Prostate gland (tissue), 2 donors: ENCODE measurements at regions of chr2 and their contacts with region 1.

Region 1: DNA sequence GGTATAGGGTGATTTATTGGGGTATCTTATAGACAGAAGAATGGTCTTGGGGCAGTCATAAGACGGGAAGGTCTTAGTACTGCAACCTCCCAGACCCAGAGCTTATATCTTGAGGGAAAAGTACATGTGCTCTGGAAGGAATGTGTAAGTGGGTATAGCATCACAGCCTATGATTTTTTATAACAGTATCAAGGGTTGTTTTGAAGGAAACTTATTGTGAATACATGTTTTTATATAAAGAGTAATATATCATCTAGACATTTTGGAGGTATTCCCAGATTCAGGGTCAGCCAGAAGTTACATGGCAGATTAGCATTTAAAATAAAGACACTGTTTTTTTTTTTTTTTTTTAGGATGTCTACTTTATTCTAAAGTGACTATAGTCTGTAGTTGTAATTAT is 47.6 kb upstream of the STON1 start:
- DNase-seq: no peak
- H3K4me3 ChIP-seq: no peak overlapping the region
- H3K27ac ChIP-seq: peak overlapping the region; percentile 30 to 55
- H3K4me1 ChIP-seq: no peaks in the 10 kb centered on the region
- H3K27me3 ChIP-seq: no peaks in the 10 kb centered on the region
- CTCF ChIP-seq: no peak
- POLR2A ChIP-seq: no peak

Region 2: GRCh38 chr2:48452108-48452507 is 30.2 kb before region 1 on chr2:
- intact Hi-C with region 1: no loop called
- DNase-seq: no peak
- H3K4me3 ChIP-seq: no peak overlapping the region
- H3K27ac ChIP-seq: no peak overlapping the region
- H3K4me1 ChIP-seq: peaks cover 14% of the 10 kb centered on the region
- H3K27me3 ChIP-seq: no peaks in the 10 kb centered on the region
- CTCF ChIP-seq: no peak
- POLR2A ChIP-seq: no peak

Region 3: GRCh38 chr2:48510329-48510728 is 28.0 kb after region 1 on chr2:
- intact Hi-C with region 1: loop called (anchors 5 kb)
- DNase-seq: no peak
- H3K4me3 ChIP-seq: no peak overlapping the region
- H3K27ac ChIP-seq: peak overlapping the region; percentile 54 to 66
- H3K4me1 ChIP-seq: peaks cover 2% of the 10 kb centered on the region
- H3K27me3 ChIP-seq: no peaks in the 10 kb centered on the region
- CTCF ChIP-seq: no peak
- POLR2A ChIP-seq: peak; percentile 18

Region 4: GRCh38 chr2:48566592-48567255 is 84.4 kb after region 1 on chr2:
- intact Hi-C with region 1: no loop called
- DNase-seq: no peak
- H3K4me3 ChIP-seq: no peak overlapping the region
- H3K27ac ChIP-seq: peak overlapping the region in 1 of 2 donors; percentile 16
- H3K4me1 ChIP-seq: no peaks in the 10 kb centered on the region
- H3K27me3 ChIP-seq: no peaks in the 10 kb centered on the region
- CTCF ChIP-seq: peak in 2 of 4 experiments; percentile 8 to 17
- POLR2A ChIP-seq: no peak